H1 (cell line): ENCODE measurements at regions of chr1 and their contacts with region 1.

Region 1: DNA sequence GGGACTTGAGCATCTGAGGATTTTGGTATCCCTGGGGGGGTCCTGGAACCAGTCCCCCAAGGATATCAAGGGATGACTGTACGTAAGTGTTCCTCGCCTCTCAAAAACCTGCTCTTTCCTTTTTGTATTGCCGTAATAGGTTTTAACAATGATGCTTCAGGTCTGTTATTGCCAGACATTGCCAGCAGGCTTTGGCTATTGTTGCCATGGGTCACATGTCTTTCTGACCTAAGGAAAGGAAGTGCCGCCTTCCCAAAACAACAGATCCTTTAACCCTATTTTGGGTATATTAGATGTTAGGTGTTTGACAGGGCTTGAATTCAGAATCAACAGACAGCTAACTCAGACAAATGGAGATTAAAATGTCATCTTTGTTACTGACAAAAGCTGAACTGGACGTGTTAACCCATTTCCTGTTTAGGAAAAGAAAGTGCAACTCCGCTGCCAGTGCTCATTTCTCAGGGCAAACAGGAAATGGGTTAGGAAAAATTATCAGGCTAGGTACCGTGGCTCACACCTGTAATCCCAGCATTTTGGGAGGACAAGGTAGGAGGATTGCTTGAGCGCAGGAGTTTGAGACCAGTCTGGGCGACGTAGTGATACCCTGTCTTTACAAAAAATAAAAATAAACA is 12.4 kb upstream of the PRPF38B start:
- DNase-seq: no peak
- H3K4me3 ChIP-seq: no peak overlapping the region
- H3K27ac ChIP-seq: no peak overlapping the region
- H3K4me1 ChIP-seq: peaks cover 0 to 5% (median 2%) of the 10 kb centered on the region in 4 experiments; a peak in 3 of 7 replicates
- H3K27me3 ChIP-seq: no peaks in the 10 kb centered on the region
- CTCF ChIP-seq: no peak
- EP300 ChIP-seq: no peak
- POLR2A ChIP-seq: no peak
- RAD21 ChIP-seq: no peak

Region 2: GRCh38 chr1:108661030-108661620 is 18.6 kb before region 1 on chr1 and contains the start of gene HENMT1:
- CTCF ChIA-PET with region 1: no interaction called
- POLR2A ChIA-PET with region 1: interaction called, 17 read pairs
- DNase-seq: peak; percentile 27 to 77
- H3K4me3 ChIP-seq: peak within 1 kb of the TSS; percentile 34 to 62 (median 48)
- H3K27ac ChIP-seq: no peak within 1 kb of the TSS
- H3K4me1 ChIP-seq: peaks cover 0 to 4% (median 0%) of the 10 kb centered on the region in 4 experiments; a peak in 1 of 7 replicates
- H3K27me3 ChIP-seq: peaks cover 0 to 12% (median 7%) of the 10 kb centered on the region in 4 experiments; a peak in 4 of 7 replicates
- CTCF ChIP-seq: no peak
- EP300 ChIP-seq: no peak
- POLR2A ChIP-seq: peak; percentile 58 to 60
- RAD21 ChIP-seq: no peak
- total RNA-seq, gene HENMT1: 5.6 TPM in 2 replicates